ENCODE measurements at regions of chr1 and their contacts with region 1.

Region 1: GRCh38 chr1:222124602-222125001 is 382.7 kb upstream of the DUSP10 start:
- DNase-seq: no peak
- H3K4me3 ChIP-seq: no peak overlapping the region
- H3K4me3 Mint-ChIP-seq: no peak overlapping the region
- H3K27ac ChIP-seq: no peak overlapping the region
- H3K27ac Mint-ChIP-seq: no peak overlapping the region
- H3K4me1 ChIP-seq: no peaks in the 10 kb centered on the region
- H3K4me1 Mint-ChIP-seq: peaks cover 0 to 6% (median under 1%) of the 10 kb centered on the region in 4 donors
- H3K27me3 ChIP-seq: no peaks in the 10 kb centered on the region
- H3K27me3 Mint-ChIP-seq: peaks cover 0 to 7% of the 10 kb centered on the region in 2 donors

Region 2: DNA sequence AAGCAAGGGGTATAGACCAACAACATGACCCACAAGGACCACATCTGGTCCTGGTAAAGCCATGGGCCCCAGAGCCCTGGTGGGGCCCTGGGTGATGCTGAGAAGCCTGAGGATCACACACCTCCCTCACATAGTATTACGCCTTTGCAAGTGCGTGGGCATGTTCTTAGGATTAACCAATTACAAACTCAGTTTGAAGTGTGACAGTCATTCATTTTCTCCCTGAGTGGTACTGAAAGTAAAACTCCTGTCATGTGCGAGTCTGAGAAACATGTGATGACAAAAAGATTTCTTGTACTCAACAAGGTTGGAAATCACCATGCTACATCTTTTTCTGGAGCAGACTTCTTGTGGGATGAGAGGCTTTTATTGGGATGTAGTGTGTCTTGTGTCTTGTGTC is 67.4 kb before region 1 on chr1:
- CTCF ChIA-PET with region 1: no interaction called
- POLR2A ChIA-PET with region 1: no interaction called
- intact Hi-C with region 1: no loop called
- DNase-seq: no peak
- H3K4me3 ChIP-seq: no peak overlapping the region
- H3K4me3 Mint-ChIP-seq: no peak overlapping the region
- H3K27ac ChIP-seq: no peak overlapping the region
- H3K27ac Mint-ChIP-seq: no peak overlapping the region
- H3K4me1 ChIP-seq: no peaks in the 10 kb centered on the region
- H3K4me1 Mint-ChIP-seq: no peaks in the 10 kb centered on the region
- H3K27me3 ChIP-seq: no peaks in the 10 kb centered on the region
- H3K27me3 Mint-ChIP-seq: no peaks in the 10 kb centered on the region

Region 3: GRCh38 chr1:222095606-222096475 is 28.8 kb before region 1 on chr1:
- CTCF ChIA-PET with region 1: interaction called, 15 read pairs
- POLR2A ChIA-PET with region 1: no interaction called
- intact Hi-C with region 1: no loop called
- DNase-seq: peak; percentile 53 to 69 (median 61)
- H3K4me3 ChIP-seq: no peak overlapping the region
- H3K4me3 Mint-ChIP-seq: no peak overlapping the region
- H3K27ac ChIP-seq: no peak overlapping the region
- H3K27ac Mint-ChIP-seq: no peak overlapping the region
- H3K4me1 ChIP-seq: no peaks in the 10 kb centered on the region
- H3K4me1 Mint-ChIP-seq: no peaks in the 10 kb centered on the region
- H3K27me3 ChIP-seq: no peaks in the 10 kb centered on the region
- H3K27me3 Mint-ChIP-seq: no peaks in the 10 kb centered on the region

Measured in CD4-positive, alpha-beta memory T cell (primary cell).